ENCODE measurements at regions of chr15 and their contacts with region 1.

Region 1: GRCh38 chr15:58770857-58771620 is at the start of gene MINDY2:
- DNase-seq: peak; percentile 97
- ATAC-seq: peak; percentile 98
- H3K4me3 ChIP-seq: peak within 1 kb of the TSS; percentile 90 to 93
- H3K27ac ChIP-seq: peak within 1 kb of the TSS; percentile 91
- H3K4me1 ChIP-seq: peaks cover 18% of the 10 kb centered on the region
- H3K27me3 ChIP-seq: no peaks in the 10 kb centered on the region
- CTCF ChIP-seq: peak; percentile 53
- total RNA-seq, gene MINDY2: 6.8 TPM

Region 2: GRCh38 chr15:58933281-58934113 is 162.5 kb after region 1 on chr15 and contains the start of gene SLTM:
- CTCF ChIA-PET with region 1: no interaction called
- POLR2A ChIA-PET with region 1: no interaction called
- in situ Hi-C with region 1: no loop called
- intact Hi-C with region 1: loop called (anchors 5 kb)
- DNase-seq: peak; percentile 76
- ATAC-seq: peak; percentile 99
- H3K4me3 ChIP-seq: peak within 1 kb of the TSS; percentile 94 to 98
- H3K27ac ChIP-seq: peak within 1 kb of the TSS; percentile 99
- H3K4me1 ChIP-seq: peaks cover 15% of the 10 kb centered on the region
- H3K27me3 ChIP-seq: no peaks in the 10 kb centered on the region
- CTCF ChIP-seq: no peak
- total RNA-seq, gene SLTM: 75.7 TPM

Region 3: GRCh38 chr15:58980351-58980939 is 209.4 kb after region 1 on chr15:
- CTCF ChIA-PET with region 1: no interaction called
- POLR2A ChIA-PET with region 1: no interaction called
- in situ Hi-C with region 1: no loop called
- intact Hi-C with region 1: no loop called
- DNase-seq: no peak
- ATAC-seq: no peak
- H3K4me3 ChIP-seq: no peak overlapping the region
- H3K27ac ChIP-seq: no peak overlapping the region
- H3K4me1 ChIP-seq: no peaks in the 10 kb centered on the region
- H3K27me3 ChIP-seq: no peaks in the 10 kb centered on the region
- CTCF ChIP-seq: peak; percentile 62; the same call in 1 of the 2 replicates

Region 4: GRCh38 chr15:59222906-59223550 is 452.0 kb after region 1 on chr15:
- CTCF ChIA-PET with region 1: interaction called, 12 read pairs
- POLR2A ChIA-PET with region 1: no interaction called
- in situ Hi-C with region 1: no loop called
- intact Hi-C with region 1: no loop called
- DNase-seq: no peak
- ATAC-seq: no peak
- H3K4me3 ChIP-seq: no peak overlapping the region
- H3K27ac ChIP-seq: no peak overlapping the region
- H3K4me1 ChIP-seq: no peaks in the 10 kb centered on the region
- H3K27me3 ChIP-seq: no peaks in the 10 kb centered on the region
- CTCF ChIP-seq: no peak